ENCODE measurements at regions of chr10 and their contacts with region 1.

Region 1: GRCh38 chr10:71708301-71708703 is 11.3 kb downstream of the C10orf105 start:
- DNase-seq: peak; percentile 78
- H3K4me3 Mint-ChIP-seq: no peak overlapping the region
- H3K27ac Mint-ChIP-seq: no peak overlapping the region
- H3K4me1 Mint-ChIP-seq: peaks cover 35% of the 10 kb centered on the region
- H3K27me3 Mint-ChIP-seq: no peaks in the 10 kb centered on the region

Region 2: GRCh38 chr10:71319042-71319799 is 389.1 kb before region 1 on chr10 and contains the start of gene SLC29A3:
- CTCF ChIA-PET with region 1: interaction called, 40 read pairs
- POLR2A ChIA-PET with region 1: no interaction called
- intact Hi-C with region 1: loop called (anchors 5 kb)
- DNase-seq: peak; percentile 93
- H3K4me3 Mint-ChIP-seq: peak within 1 kb of the TSS; percentile 90
- H3K27ac Mint-ChIP-seq: peak within 1 kb of the TSS; percentile 46
- H3K4me1 Mint-ChIP-seq: peaks cover 23% of the 10 kb centered on the region
- H3K27me3 Mint-ChIP-seq: no peaks in the 10 kb centered on the region
- total RNA-seq, gene SLC29A3: 2.5 to 3.0 TPM

Region 3: GRCh38 chr10:71383972-71384687 is 324.2 kb before region 1 on chr10:
- CTCF ChIA-PET with region 1: interaction called, 41 read pairs
- POLR2A ChIA-PET with region 1: no interaction called
- intact Hi-C with region 1: no loop called
- DNase-seq: peak; percentile 81
- H3K4me3 Mint-ChIP-seq: no peak overlapping the region
- H3K27ac Mint-ChIP-seq: no peak overlapping the region
- H3K4me1 Mint-ChIP-seq: no peaks in the 10 kb centered on the region
- H3K27me3 Mint-ChIP-seq: peaks cover 1% of the 10 kb centered on the region

Region 4: DNA sequence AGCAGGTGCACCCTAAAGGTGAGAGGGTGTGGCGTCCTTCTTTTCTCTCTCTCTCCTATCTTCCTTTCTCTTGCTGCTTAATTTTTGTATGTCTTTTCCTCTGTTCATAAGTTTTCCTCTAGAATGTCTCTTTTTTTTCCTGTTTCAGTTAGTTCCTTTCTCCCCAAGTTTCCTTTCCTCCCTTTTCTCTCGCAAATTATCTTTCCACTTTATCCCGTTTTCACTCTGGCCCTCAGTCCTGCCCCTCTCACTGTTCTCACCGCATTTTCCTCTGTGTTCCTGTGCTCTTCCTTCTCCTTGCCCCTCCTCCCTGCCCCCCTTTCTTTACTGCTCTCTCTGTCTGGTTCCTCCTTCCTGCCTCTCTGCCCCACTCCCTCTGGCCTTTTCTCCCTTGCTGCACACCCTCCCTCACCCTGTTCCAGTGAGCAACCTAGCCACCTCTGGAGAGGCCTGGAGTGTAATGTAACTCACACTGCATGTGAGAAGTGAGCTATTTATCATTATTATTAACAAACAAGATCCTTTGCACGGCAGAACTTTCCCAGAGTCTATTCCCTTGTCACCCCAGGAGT is 147.2 kb before region 1 on chr10:
- CTCF ChIA-PET with region 1: no interaction called
- POLR2A ChIA-PET with region 1: no interaction called
- intact Hi-C with region 1: no loop called
- DNase-seq: no peak
- H3K4me3 Mint-ChIP-seq: no peak overlapping the region
- H3K27ac Mint-ChIP-seq: no peak overlapping the region
- H3K4me1 Mint-ChIP-seq: no peaks in the 10 kb centered on the region
- H3K27me3 Mint-ChIP-seq: peaks cover 12% of the 10 kb centered on the region

Region 5: DNA sequence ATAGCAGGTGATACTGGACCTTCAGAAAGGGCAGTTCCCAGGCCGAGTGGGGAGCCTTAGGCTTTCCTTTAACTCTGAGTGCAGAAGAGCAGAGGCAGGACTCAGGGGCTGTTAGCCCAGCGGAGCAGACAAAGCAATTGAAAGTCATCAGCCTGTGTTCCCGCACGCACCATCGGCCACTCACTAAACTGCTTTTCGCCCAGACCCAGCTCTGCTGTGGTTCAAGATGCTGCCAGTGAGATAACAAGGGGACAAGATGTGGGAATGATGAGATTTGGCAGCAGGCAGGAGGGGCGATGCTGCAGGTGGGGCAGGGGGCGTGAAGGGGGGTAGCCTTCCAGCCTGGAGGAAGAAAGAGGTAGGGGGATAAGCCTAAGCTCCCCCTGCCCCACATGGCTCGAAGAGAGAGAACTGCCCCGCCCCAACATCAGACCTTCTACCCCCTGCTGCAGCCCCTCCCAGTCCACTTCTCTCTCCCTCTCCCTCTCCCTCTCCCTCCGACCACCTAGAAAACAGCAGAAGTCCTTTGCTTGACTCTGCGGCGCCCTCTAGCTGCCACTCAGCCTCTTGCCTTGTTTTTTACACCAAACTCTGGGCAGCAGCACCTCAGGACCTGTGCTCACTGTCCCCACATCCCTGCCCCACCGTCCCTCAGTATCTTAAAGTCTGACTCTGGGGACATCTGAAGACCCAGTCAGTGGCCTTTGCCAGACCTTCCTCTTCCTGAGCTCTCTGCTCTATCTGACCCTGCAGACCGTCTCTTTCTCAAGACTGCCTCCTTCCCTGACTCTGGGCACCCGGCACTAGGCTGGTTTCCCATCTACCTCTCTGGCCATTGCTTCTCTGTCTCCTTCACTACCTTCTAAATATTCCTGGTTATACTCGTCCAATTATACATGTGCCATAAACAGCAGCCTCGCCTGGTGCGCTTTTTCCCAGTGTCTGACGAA is 99.2 kb before region 1 on chr10:
- CTCF ChIA-PET with region 1: interaction called, 10 read pairs
- POLR2A ChIA-PET with region 1: no interaction called
- intact Hi-C with region 1: no loop called
- DNase-seq: peak; percentile 78
- H3K4me3 Mint-ChIP-seq: no peak overlapping the region
- H3K27ac Mint-ChIP-seq: no peak overlapping the region
- H3K4me1 Mint-ChIP-seq: no peaks in the 10 kb centered on the region
- H3K27me3 Mint-ChIP-seq: peaks cover 1% of the 10 kb centered on the region

Region 6: GRCh38 chr10:71748671-71749191 is 40.4 kb after region 1 on chr10:
- CTCF ChIA-PET with region 1: interaction called, 20 read pairs
- POLR2A ChIA-PET with region 1: interaction called, 3 read pairs
- intact Hi-C with region 1: no loop called
- DNase-seq: peak; percentile 91
- H3K4me3 Mint-ChIP-seq: peak overlapping the region; percentile 73
- H3K27ac Mint-ChIP-seq: peak overlapping the region; percentile 98
- H3K4me1 Mint-ChIP-seq: peaks cover 97% of the 10 kb centered on the region
- H3K27me3 Mint-ChIP-seq: no peaks in the 10 kb centered on the region

Region 7: DNA sequence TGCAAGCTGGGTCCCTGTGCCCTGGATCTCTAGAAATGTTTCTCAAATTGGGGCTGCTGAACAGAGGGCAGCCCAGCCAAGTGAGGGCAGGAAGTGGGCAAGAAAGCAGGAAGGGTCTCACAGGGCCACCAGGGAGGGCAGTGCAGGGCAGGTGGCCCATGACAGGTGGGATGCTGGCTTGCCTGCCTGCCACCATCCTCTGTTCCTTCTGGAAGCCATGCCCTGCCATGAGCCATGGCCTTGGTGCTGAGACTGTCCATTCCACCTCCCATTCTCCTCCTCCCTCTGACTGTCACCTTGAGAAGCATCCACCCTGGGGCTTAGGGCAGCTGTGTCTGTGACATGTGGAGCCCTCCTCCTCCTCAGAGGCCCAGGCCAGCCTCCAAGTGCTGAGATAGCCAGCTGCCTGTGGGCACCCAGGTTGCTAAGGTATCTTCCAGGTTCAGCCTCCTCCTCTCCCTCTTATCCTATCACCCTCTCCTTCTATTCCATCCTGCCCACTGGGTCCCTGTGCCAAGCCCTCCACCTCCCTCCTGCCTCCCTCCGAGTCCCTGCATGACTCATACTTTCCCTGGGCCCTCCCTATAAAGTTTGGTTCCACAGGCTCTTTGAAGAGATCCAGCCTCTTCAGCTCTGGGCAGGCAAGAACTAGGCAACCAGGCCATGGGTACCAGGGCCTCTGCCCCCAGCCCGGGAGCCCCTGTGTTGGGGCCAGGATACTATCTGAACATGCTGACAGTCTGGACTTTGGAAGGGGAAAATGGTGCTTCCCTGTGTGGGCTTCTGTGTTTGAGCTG is 63.7 kb after region 1 on chr10:
- CTCF ChIA-PET with region 1: interaction called, 47 read pairs
- POLR2A ChIA-PET with region 1: interaction called, 5 read pairs
- intact Hi-C with region 1: loop called (anchors 5 kb)
- DNase-seq: peak; percentile 72
- H3K4me3 Mint-ChIP-seq: peak overlapping the region; percentile 92
- H3K27ac Mint-ChIP-seq: peak overlapping the region; percentile 99
- H3K4me1 Mint-ChIP-seq: peaks cover 80% of the 10 kb centered on the region
- H3K27me3 Mint-ChIP-seq: no peaks in the 10 kb centered on the region

Region 8: GRCh38 chr10:71788954-71789353 is 80.7 kb after region 1 on chr10:
- CTCF ChIA-PET with region 1: no interaction called
- POLR2A ChIA-PET with region 1: no interaction called
- intact Hi-C with region 1: no loop called
- DNase-seq: no peak
- H3K4me3 Mint-ChIP-seq: no peak overlapping the region
- H3K27ac Mint-ChIP-seq: no peak overlapping the region
- H3K4me1 Mint-ChIP-seq: peaks cover 2% of the 10 kb centered on the region
- H3K27me3 Mint-ChIP-seq: no peaks in the 10 kb centered on the region

Region 9: GRCh38 chr10:71893920-71894319 is 185.6 kb after region 1 on chr10:
- CTCF ChIA-PET with region 1: no interaction called
- POLR2A ChIA-PET with region 1: no interaction called
- intact Hi-C with region 1: no loop called
- DNase-seq: no peak
- H3K4me3 Mint-ChIP-seq: no peak overlapping the region
- H3K27ac Mint-ChIP-seq: no peak overlapping the region
- H3K4me1 Mint-ChIP-seq: peaks cover 6% of the 10 kb centered on the region
- H3K27me3 Mint-ChIP-seq: peaks cover 16% of the 10 kb centered on the region